ENCODE measurements at regions of chr7 and their contacts with region 1.

Region 1: GRCh38 chr7:70571403-70571934 is 560.5 kb upstream of the GALNT17 start:
- DNase-seq: peak; percentile 4
- ATAC-seq: no peak
- H3K4me3 ChIP-seq: no peak overlapping the region
- H3K27ac ChIP-seq: no peak overlapping the region
- H3K4me1 ChIP-seq: no peaks in the 10 kb centered on the region; the same call in 1 of the 2 replicates
- H3K27me3 ChIP-seq: no peaks in the 10 kb centered on the region
- CTCF ChIP-seq: no peak

Region 2: GRCh38 chr7:70446448-70447143 is 124.9 kb before region 1 on chr7:
- CTCF ChIA-PET with region 1: no interaction called
- POLR2A ChIA-PET with region 1: no interaction called
- in situ Hi-C with region 1: no loop called
- intact Hi-C with region 1: no loop called
- DNase-seq: no peak
- ATAC-seq: no peak
- H3K4me3 ChIP-seq: no peak overlapping the region
- H3K27ac ChIP-seq: no peak overlapping the region
- H3K4me1 ChIP-seq: no peaks in the 10 kb centered on the region
- H3K27me3 ChIP-seq: no peaks in the 10 kb centered on the region
- CTCF ChIP-seq: no peak

Region 3: DNA sequence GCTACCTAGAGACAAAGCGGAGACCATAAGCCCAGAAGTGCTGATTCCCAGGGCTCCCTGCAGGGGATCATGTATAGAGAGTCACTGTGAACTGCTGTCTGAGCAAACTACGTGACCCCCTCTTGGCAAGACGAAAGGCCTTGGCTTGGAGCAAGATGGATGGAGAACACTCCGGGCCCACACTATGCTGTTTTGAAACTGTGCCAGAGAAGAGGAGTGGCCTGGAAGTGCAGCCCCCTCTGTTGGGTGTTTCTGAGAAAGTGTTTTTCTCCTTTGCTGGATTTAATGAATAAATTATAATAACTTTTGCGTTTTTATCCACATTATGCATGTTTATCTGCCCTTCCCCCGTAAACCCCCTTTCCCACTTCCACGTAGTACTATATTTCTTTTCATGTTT is 78.8 kb before region 1 on chr7:
- CTCF ChIA-PET with region 1: no interaction called
- POLR2A ChIA-PET with region 1: no interaction called
- in situ Hi-C with region 1: no loop called
- intact Hi-C with region 1: no loop called
- DNase-seq: no peak
- ATAC-seq: no peak
- H3K4me3 ChIP-seq: no peak overlapping the region
- H3K27ac ChIP-seq: no peak overlapping the region
- H3K4me1 ChIP-seq: no peaks in the 10 kb centered on the region
- H3K27me3 ChIP-seq: no peaks in the 10 kb centered on the region
- CTCF ChIP-seq: no peak

Region 4: DNA sequence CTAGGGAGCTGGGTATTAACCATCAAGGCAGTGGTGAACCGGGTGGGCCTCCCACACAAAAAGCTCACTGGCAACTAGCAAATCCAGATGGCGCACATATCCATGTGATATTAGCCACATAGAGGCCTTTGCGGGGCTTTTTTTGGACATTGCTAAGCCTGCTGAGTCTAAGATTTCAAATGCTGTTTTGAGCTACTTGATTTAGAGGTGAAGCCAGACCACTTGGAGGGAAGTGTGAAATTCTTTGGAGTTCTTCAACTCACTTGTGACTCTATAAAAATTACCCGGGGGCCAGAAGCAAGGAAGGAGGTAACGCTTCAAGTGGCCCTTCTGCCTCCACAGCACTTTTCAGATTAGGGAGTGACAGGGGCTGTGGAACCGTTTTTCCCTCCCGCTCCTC is 59.3 kb before region 1 on chr7:
- CTCF ChIA-PET with region 1: no interaction called
- POLR2A ChIA-PET with region 1: interaction called, 12 read pairs
- in situ Hi-C with region 1: no loop called
- intact Hi-C with region 1: no loop called
- DNase-seq: no peak
- ATAC-seq: no peak
- H3K4me3 ChIP-seq: no peak overlapping the region
- H3K27ac ChIP-seq: no peak overlapping the region
- H3K4me1 ChIP-seq: no peaks in the 10 kb centered on the region
- H3K27me3 ChIP-seq: no peaks in the 10 kb centered on the region
- CTCF ChIP-seq: no peak

Region 5: GRCh38 chr7:70585071-70585470 is 13.6 kb after region 1 on chr7:
- CTCF ChIA-PET with region 1: no interaction called
- POLR2A ChIA-PET with region 1: no interaction called
- in situ Hi-C with region 1: no loop called
- intact Hi-C with region 1: no loop called
- DNase-seq: no peak
- ATAC-seq: no peak
- H3K4me3 ChIP-seq: no peak overlapping the region
- H3K27ac ChIP-seq: no peak overlapping the region
- H3K4me1 ChIP-seq: no peaks in the 10 kb centered on the region
- H3K27me3 ChIP-seq: no peaks in the 10 kb centered on the region
- CTCF ChIP-seq: no peak; the same call in 1 of the 2 replicates

Region 6: DNA sequence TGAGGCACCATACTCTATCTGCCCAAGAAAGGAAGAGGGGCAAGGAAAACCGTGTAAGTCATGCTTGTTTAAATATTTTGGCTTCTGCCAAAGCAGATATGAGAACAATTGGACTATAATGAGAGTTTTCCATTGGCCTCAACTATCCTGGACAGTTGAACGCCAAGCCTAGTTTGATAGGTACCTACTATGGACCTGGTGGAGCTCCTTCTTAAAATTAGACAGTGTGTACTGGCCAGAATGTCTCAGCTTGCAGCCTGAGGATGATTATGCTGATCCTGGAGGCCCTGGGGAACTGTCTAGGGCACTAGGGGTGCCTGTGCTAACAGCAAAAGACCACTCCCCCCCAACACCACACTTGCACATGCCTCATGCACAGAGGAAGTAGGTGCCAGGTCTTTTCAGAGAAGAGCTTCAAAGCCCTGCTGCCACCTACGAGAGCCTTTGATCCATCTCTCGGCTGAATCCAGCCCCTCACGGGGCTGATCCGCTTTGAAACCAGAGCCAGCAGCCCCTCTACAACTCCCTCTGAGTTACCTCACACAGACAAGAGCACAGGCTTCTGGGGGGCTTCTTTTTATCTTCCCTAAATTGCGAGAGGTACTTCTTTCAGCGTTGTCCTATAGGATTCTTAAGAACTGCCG is 86.6 kb after region 1 on chr7:
- CTCF ChIA-PET with region 1: no interaction called
- POLR2A ChIA-PET with region 1: interaction called, 15 read pairs
- in situ Hi-C with region 1: no loop called
- intact Hi-C with region 1: no loop called
- DNase-seq: no peak
- ATAC-seq: no peak
- H3K4me3 ChIP-seq: no peak overlapping the region
- H3K27ac ChIP-seq: no peak overlapping the region
- H3K4me1 ChIP-seq: no peaks in the 10 kb centered on the region
- H3K27me3 ChIP-seq: no peaks in the 10 kb centered on the region
- CTCF ChIP-seq: no peak

Region 7: GRCh38 chr7:71272509-71273490 is 701.3 kb after region 1 on chr7:
- CTCF ChIA-PET with region 1: no interaction called
- POLR2A ChIA-PET with region 1: no interaction called
- in situ Hi-C with region 1: no loop called
- intact Hi-C with region 1: no loop called
- DNase-seq: no peak
- ATAC-seq: no peak
- H3K4me3 ChIP-seq: no peak overlapping the region
- H3K27ac ChIP-seq: no peak overlapping the region
- H3K4me1 ChIP-seq: no peaks in the 10 kb centered on the region
- H3K27me3 ChIP-seq: no peaks in the 10 kb centered on the region
- CTCF ChIP-seq: no peak